Activated CD8-positive, alpha-beta T cell treated with anti-CD3 and anti-CD28 coated beads for 36 hours (primary cell): ENCODE measurements at regions of chr6 and their contacts with region 1.

Region 1: GRCh38 chr6:144931172-144932035 is 646.3 kb downstream of the UTRN start:
- DNase-seq: peak; percentile 67
- ATAC-seq: peak; percentile 65
- H3K4me3 Mint-ChIP-seq: no peak overlapping the region
- H3K27ac Mint-ChIP-seq: no peak overlapping the region
- H3K4me1 Mint-ChIP-seq: peaks cover 1% of the 10 kb centered on the region
- H3K27me3 Mint-ChIP-seq: no peaks in the 10 kb centered on the region
- CTCF ChIP-seq: peak; percentile 77

Region 2: GRCh38 chr6:144423167-144423566 is 508.2 kb before region 1 on chr6:
- CTCF ChIA-PET with region 1: no interaction called
- POLR2A ChIA-PET with region 1: no interaction called
- intact Hi-C with region 1: loop called (anchors 5 kb)
- DNase-seq: no peak
- ATAC-seq: no peak
- H3K4me3 Mint-ChIP-seq: no peak overlapping the region
- H3K27ac Mint-ChIP-seq: no peak overlapping the region
- H3K4me1 Mint-ChIP-seq: peaks cover 20% of the 10 kb centered on the region
- H3K27me3 Mint-ChIP-seq: no peaks in the 10 kb centered on the region
- CTCF ChIP-seq: no peak

Region 3: GRCh38 chr6:145214570-145214969 is 283.2 kb after region 1 on chr6:
- CTCF ChIA-PET with region 1: no interaction called
- POLR2A ChIA-PET with region 1: no interaction called
- intact Hi-C with region 1: loop called (anchors 10 kb)
- DNase-seq: no peak
- ATAC-seq: no peak
- H3K4me3 Mint-ChIP-seq: no peak overlapping the region
- H3K27ac Mint-ChIP-seq: no peak overlapping the region
- H3K4me1 Mint-ChIP-seq: no peaks in the 10 kb centered on the region
- H3K27me3 Mint-ChIP-seq: peaks cover 2% of the 10 kb centered on the region
- CTCF ChIP-seq: peak; percentile 67